Caco-2 (cell line): ENCODE measurements at regions of chr4 and their contacts with region 1.

Region 1: GRCh38 chr4:158159054-158159717 is 13.6 kb downstream of the GASK1B start:
- DNase-seq: no peak
- H3K4me3 ChIP-seq: no peak overlapping the region
- H3K4me3 Mint-ChIP-seq: no peak overlapping the region
- H3K27ac Mint-ChIP-seq: no peak overlapping the region
- H3K4me1 ChIP-seq: peaks cover 66% of the 10 kb centered on the region
- H3K4me1 Mint-ChIP-seq: peaks cover 40% of the 10 kb centered on the region
- H3K27me3 ChIP-seq: no peaks in the 10 kb centered on the region
- H3K27me3 Mint-ChIP-seq: no peaks in the 10 kb centered on the region
- CTCF ChIP-seq: no peak

Region 2: GRCh38 chr4:157918021-157918420 is 241.2 kb before region 1 on chr4:
- CTCF ChIA-PET with region 1: no interaction called
- POLR2A ChIA-PET with region 1: no interaction called
- intact Hi-C with region 1: no loop called
- DNase-seq: no peak
- H3K4me3 ChIP-seq: no peak overlapping the region
- H3K4me3 Mint-ChIP-seq: no peak overlapping the region
- H3K27ac Mint-ChIP-seq: no peak overlapping the region
- H3K4me1 ChIP-seq: no peaks in the 10 kb centered on the region
- H3K4me1 Mint-ChIP-seq: no peaks in the 10 kb centered on the region
- H3K27me3 ChIP-seq: no peaks in the 10 kb centered on the region
- H3K27me3 Mint-ChIP-seq: no peaks in the 10 kb centered on the region
- CTCF ChIP-seq: no peak

Region 3: DNA sequence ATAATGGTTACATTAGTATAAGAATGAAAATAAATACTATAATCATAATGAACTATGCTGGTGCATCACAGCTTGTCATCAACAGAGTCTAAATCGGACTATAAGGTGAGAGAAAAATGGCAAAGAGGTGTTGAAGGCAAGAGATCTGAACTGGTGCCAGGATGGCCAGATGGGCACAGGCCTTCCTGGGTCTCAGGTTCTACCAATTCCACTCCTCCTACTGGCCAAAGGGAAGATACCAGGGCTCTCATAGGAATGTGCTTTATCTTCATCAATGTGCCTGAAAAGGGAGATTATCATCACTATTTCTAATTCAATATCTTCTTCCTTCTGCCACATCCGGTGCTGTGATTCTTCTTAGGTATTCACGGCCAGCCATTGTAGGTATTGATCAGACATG is 94.0 kb before region 1 on chr4:
- CTCF ChIA-PET with region 1: no interaction called
- POLR2A ChIA-PET with region 1: no interaction called
- intact Hi-C with region 1: no loop called
- DNase-seq: no peak
- H3K4me3 ChIP-seq: no peak overlapping the region
- H3K4me3 Mint-ChIP-seq: no peak overlapping the region
- H3K27ac Mint-ChIP-seq: no peak overlapping the region
- H3K4me1 ChIP-seq: no peaks in the 10 kb centered on the region
- H3K4me1 Mint-ChIP-seq: no peaks in the 10 kb centered on the region
- H3K27me3 ChIP-seq: no peaks in the 10 kb centered on the region
- H3K27me3 Mint-ChIP-seq: no peaks in the 10 kb centered on the region
- CTCF ChIP-seq: no peak

Region 4: DNA sequence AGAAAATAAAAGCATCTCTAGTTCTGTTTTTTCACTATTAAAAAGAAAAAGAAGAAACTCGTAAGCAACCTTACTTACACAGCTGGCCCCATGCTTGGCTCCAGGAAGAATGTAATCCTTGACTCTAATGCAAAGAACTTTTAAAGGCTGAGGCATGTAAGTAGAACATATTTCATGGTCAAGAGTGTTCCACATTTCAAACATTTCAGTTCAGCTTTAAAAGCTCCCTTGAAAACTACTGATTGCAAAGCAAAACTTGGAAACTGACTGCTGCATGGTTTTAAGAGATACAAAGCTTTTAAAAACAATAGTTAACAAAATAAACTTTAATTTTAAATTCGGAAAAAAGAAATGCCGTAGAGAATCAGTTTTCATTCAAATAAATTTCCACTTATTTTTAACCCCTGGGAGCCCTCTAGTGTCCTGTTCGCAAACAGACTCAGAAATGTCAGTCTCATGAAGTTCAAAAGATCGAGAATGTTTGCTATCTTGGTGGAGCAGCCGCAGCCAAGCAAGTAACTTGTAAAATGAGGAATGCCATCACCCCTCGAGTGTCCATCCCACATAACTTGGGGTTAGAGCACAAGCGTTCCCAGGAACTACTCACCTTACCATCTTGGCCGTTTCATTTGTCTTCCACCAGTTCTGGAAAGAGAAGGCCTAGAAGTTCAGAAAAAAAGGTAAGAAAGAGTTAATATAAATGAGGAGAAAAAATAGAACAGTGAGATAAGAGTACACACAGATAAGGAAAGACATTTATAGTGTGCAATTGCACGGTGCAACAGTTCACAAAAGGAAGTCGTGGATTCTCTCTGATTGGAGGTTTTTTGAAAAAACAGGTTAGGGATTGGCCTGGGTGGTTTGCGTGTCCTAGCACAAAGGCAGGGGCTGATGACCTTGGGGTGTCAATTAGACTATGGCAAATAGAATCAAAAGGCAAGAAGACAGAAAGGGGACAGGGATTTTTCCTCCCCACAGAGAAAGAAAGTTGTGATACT is 13.4 kb after region 1 on chr4 and contains the start of gene GASK1B:
- CTCF ChIA-PET with region 1: interaction called, 4 read pairs
- POLR2A ChIA-PET with region 1: no interaction called
- intact Hi-C with region 1: loop called (anchors 1 kb)
- DNase-seq: peak; percentile 56 to 68
- H3K4me3 ChIP-seq: peak within 1 kb of the TSS; percentile 49
- H3K4me3 Mint-ChIP-seq: peak within 1 kb of the TSS; percentile 89
- H3K27ac Mint-ChIP-seq: peak within 1 kb of the TSS; percentile 97
- H3K4me1 ChIP-seq: peaks cover 14% of the 10 kb centered on the region
- H3K4me1 Mint-ChIP-seq: peaks cover 14% of the 10 kb centered on the region
- H3K27me3 ChIP-seq: no peaks in the 10 kb centered on the region
- H3K27me3 Mint-ChIP-seq: no peaks in the 10 kb centered on the region
- CTCF ChIP-seq: peak; percentile 25 to 27
- total RNA-seq, gene GASK1B: 42.5 and 48.5 TPM in 2 replicates

Region 5: DNA sequence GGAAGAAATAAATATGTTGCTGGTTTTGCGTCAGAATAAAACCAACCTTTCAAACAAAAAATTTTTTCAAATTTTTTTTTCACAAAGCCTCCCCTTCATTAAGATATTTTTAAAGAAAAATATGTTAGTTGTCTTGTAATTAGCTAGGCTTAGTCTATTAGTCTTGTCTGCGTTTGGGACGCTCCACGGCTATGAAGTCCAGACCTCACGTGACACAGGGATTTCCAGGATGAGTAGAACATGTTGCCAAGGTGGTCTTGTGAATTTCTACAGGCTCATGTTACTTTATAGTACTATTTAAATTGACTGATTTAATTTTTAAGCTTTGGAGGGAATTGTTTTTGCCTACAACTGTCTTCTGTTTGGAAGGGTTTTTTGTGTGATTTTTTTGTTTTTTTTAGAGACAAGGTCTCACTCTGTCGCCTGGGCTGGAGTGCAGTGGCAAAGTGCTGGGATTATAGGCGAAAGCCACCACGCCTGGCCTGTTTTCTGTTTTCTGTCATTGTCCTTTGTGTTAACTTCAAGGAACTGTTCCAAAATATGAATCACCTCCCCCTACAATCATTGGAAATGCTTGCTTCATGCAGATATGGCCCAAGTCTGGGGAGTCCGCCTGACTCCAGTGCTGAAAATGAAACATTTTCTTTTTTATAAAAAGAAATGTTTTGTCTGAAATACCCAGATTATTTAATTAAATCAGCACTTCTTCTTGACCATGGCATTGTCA is 77.3 kb after region 1 on chr4:
- CTCF ChIA-PET with region 1: no interaction called
- POLR2A ChIA-PET with region 1: no interaction called
- intact Hi-C with region 1: no loop called
- DNase-seq: no peak
- H3K4me3 ChIP-seq: no peak overlapping the region
- H3K4me3 Mint-ChIP-seq: no peak overlapping the region
- H3K27ac Mint-ChIP-seq: no peak overlapping the region
- H3K4me1 ChIP-seq: no peaks in the 10 kb centered on the region
- H3K4me1 Mint-ChIP-seq: no peaks in the 10 kb centered on the region
- H3K27me3 ChIP-seq: no peaks in the 10 kb centered on the region
- H3K27me3 Mint-ChIP-seq: no peaks in the 10 kb centered on the region
- CTCF ChIP-seq: no peak